Heart left ventricle (tissue), 16 donors: ENCODE measurements at regions of chr11 and their contacts with region 1.

Region 1: GRCh38 chr11:111841370-111842053 is 29.9 kb downstream of the ALG9 start:
- DNase-seq: peak; percentile 82 to 87 (median 86)
- ATAC-seq: peak; percentile 79 to 92 (median 88)
- H3K4me3 ChIP-seq: no peak overlapping the region
- H3K27ac ChIP-seq: no peak overlapping the region
- H3K4me1 ChIP-seq: peaks cover 0 to 16% (median 1%) of the 10 kb centered on the region in 12 donors
- H3K27me3 ChIP-seq: no peaks in the 10 kb centered on the region
- CTCF ChIP-seq: peak; percentile 84 to 95 (median 92)
- POLR2A ChIP-seq: no peak

Region 2: DNA sequence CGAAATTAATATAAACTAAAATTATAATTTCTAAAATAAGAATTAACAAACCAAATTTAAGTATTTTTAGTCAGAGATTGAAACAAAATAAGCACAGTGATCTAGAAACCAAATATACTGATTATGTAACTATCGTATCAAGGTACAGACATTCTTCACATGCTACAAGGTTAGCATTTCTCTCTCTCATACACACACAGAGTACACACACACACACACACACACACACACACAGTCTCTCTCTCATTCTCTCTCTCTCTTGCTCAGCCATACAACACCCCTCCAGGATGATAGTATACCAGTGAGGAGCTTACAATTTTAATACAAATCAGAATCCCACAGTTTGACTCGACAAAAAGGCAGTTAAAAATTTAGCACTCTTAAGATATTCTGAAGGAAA is 1611.1 kb before region 1 on chr11:
- intact Hi-C with region 1: no loop called
- DNase-seq: no peak
- ATAC-seq: no peak
- H3K4me3 ChIP-seq: no peak overlapping the region
- H3K27ac ChIP-seq: no peak overlapping the region
- H3K4me1 ChIP-seq: no peaks in the 10 kb centered on the region
- H3K27me3 ChIP-seq: no peaks in the 10 kb centered on the region
- CTCF ChIP-seq: no peak
- POLR2A ChIP-seq: no peak

Region 3: GRCh38 chr11:111454561-111455192 is 386.8 kb before region 1 on chr11:
- intact Hi-C with region 1: loop called in 3 of 10 experiments (anchors 10 kb)
- DNase-seq: peak in 1 of 5 donors; percentile 44
- ATAC-seq: peak; percentile 40 to 71 (median 52)
- H3K4me3 ChIP-seq: no peak overlapping the region
- H3K27ac ChIP-seq: no peak overlapping the region
- H3K4me1 ChIP-seq: no peaks in the 10 kb centered on the region
- H3K27me3 ChIP-seq: peaks cover 0 to 16% (median 0%) of the 10 kb centered on the region in 9 donors
- CTCF ChIP-seq: peak; percentile 15 to 48 (median 30)
- POLR2A ChIP-seq: no peak

Region 4: DNA sequence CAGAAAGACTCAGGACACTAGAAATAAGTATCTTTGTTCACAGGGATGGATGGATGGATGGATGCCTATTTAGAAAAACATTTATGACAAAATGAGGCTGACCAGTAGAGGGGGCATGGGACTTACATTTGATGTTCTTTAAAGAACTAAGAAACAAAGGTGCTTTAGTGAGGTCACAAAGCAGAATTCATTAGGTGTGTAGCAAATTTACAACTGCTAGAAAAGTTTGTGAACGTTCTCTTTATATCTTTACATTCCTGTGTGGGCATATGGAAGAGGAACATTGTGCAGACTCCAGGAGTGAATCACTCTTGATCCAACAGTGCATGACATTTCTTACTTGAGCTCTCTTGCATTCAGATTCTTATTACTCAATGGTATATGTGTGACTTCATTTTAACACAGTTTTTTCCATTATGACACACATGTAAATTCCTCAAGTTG is 255.1 kb before region 1 on chr11:
- intact Hi-C with region 1: loop called in 8 of 10 experiments (anchors 1 to 5 kb)
- DNase-seq: no peak
- ATAC-seq: peak in 3 of 4 donors; percentile 42 to 62 (median 49)
- H3K4me3 ChIP-seq: no peak overlapping the region
- H3K27ac ChIP-seq: no peak overlapping the region
- H3K4me1 ChIP-seq: peaks cover 0 to 5% (median 0%) of the 10 kb centered on the region in 12 donors
- H3K27me3 ChIP-seq: no peaks in the 10 kb centered on the region
- CTCF ChIP-seq: peak; percentile 27 to 71 (median 56)
- POLR2A ChIP-seq: no peak

Region 5: GRCh38 chr11:111777094-111778046 is 64.1 kb before region 1 on chr11:
- intact Hi-C with region 1: loop called in 7 of 10 experiments (anchors 2 to 10 kb)
- DNase-seq: peak in 1 of 5 donors; percentile 37
- ATAC-seq: peak; percentile 72 to 82 (median 79)
- H3K4me3 ChIP-seq: no peak overlapping the region
- H3K27ac ChIP-seq: peak overlapping the region in 1 of 12 donors; percentile 11
- H3K4me1 ChIP-seq: peaks cover 0 to 17% (median 12%) of the 10 kb centered on the region in 12 donors
- H3K27me3 ChIP-seq: no peaks in the 10 kb centered on the region
- CTCF ChIP-seq: peak; percentile 60 to 87 (median 84)
- POLR2A ChIP-seq: no peak